ENCODE measurements at regions of chr7 and their contacts with region 1.

Region 1: DNA sequence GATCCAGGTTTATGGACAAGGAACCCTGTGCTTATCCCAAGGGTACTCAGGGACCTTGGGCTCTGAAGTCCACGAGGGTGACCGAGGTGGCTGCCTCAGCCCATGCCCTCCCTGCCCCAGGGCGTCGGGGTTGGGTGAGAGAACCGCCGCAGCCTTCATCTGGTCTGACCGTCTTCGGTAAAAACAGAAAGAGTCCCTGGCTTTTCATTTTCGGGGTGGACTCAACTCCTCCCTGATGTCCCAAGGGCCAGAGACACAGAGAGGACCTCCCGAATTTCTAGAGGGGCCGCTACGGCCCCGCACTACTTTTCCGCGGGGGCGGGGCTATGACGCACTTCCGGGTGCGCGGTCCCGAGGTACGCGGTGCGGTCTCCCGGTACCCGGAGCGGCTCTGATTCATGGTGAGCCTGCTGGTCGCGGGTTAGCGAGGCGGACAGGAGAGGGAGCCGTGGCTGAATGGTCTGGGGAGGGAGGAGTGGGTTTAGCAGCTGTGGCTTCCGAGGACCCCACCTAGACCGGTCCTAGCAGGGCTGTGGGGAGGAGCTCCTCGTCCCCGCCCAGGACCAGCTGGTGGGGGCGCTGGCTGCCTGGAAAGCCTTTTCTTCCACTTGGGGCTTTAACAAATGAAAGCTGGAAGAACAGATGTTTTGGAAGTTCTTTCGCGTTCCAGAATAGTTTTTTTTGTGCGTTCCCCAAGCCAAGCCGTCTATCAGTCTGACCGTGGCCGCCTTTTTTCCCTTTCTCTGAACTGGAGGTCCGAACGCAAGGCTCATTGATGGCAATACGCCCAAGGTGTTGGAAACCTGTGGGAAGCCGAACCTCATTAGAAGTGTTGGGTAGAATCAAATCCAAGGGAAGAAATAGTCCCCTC is at the start of gene ZSCAN21:
- DNase-seq: peak; percentile 62
- H3K4me3 ChIP-seq: peak within 1 kb of the TSS; percentile 85
- H3K27ac ChIP-seq: peak within 1 kb of the TSS; percentile 99
- H3K27me3 ChIP-seq: no peaks in the 10 kb centered on the region
- CTCF ChIP-seq: peak; percentile 32; the same call in 1 of the 2 replicates
- polyA plus RNA-seq, gene ZSCAN21: 13.9 and 15.2 TPM in 2 replicates

Region 2: DNA sequence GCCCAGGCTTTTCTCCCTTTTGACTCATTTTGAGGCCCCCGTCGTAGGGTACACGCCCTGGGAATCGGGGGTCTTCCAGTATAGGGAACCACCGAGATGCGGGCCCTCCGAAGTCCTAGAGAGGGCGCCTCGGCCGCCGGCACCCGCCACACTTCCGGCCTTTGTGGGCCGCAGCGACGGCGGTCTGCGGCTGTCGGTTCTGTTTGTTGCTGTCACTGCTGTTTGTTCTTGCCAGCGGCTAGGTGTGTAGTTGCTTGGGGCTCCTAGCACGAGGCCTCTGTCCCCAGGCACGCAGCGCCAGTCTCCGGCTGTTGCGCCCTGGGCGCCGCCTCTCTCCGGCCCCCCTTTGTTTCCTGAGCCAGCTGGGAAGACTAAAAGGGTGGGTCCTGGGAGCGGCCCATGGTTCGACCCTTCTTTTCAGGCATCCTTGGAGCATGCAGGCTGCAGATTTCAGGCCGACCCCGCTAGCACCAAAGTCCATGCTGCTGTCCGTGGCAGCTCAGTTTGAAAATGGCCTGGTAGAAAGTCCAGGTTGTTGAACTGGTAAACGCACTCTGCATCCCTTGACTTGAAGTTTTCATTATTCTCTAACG is 52.0 kb before region 1 on chr7:
- CTCF ChIA-PET with region 1: interaction called, 174 read pairs
- POLR2A ChIA-PET with region 1: interaction called, 3 read pairs
- DNase-seq: no peak
- H3K4me3 ChIP-seq: peak overlapping the region; percentile 39
- H3K27ac ChIP-seq: no peak overlapping the region
- H3K27me3 ChIP-seq: no peaks in the 10 kb centered on the region
- CTCF ChIP-seq: peak; percentile 23; the same call in 1 of the 2 replicates

Region 3: DNA sequence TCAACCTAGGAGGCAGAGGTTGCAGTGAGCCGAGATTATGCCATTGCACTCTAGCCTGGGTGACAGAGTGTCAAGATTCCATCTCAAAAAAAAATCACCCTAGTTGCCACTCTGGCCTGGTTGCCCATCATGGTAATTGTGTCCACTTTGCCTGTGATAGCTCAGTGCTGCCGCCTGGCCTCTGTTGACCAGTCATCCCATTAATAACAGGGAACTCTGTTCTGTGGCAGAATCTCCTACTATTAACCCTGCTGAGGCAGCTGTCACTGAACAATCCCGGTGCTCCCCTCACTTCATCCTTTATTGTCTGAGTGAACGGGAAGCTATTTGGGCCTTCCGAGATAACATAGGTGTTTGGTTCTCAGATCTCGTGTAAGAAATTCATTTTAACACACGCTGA is 17.3 kb after region 1 on chr7:
- CTCF ChIA-PET with region 1: interaction called, 8 read pairs
- POLR2A ChIA-PET with region 1: interaction called, 13 read pairs
- DNase-seq: no peak
- H3K4me3 ChIP-seq: no peak overlapping the region
- H3K27ac ChIP-seq: no peak overlapping the region
- H3K27me3 ChIP-seq: no peaks in the 10 kb centered on the region
- CTCF ChIP-seq: no peak

Region 4: GRCh38 chr7:100101016-100101862 is 51.6 kb after region 1 on chr7 and contains the starts of genes AP4M1 and MCM7:
- CTCF ChIA-PET with region 1: no interaction called
- POLR2A ChIA-PET with region 1: no interaction called
- DNase-seq: peak; percentile 98
- H3K4me3 ChIP-seq: peak within 1 kb of the TSS; percentile 77
- H3K27ac ChIP-seq: peak within 1 kb of the TSS; percentile 88
- H3K27me3 ChIP-seq: no peaks in the 10 kb centered on the region
- CTCF ChIP-seq: no peak
- polyA plus RNA-seq, gene AP4M1: 25.4 and 26.1 TPM in 2 replicates
- polyA plus RNA-seq, gene MCM7: 39.5 and 44.2 TPM in 2 replicates

Measured in AG04450 (cell line).